ENCODE measurements at regions of chr6 and their contacts with region 1.

Region 1: GRCh38 chr6:151566557-151566956 is 72.7 kb downstream of the CCDC170 start:
- DNase-seq: no peak
- H3K4me3 Mint-ChIP-seq: no peak overlapping the region
- H3K27ac Mint-ChIP-seq: no peak overlapping the region
- H3K4me1 Mint-ChIP-seq: peaks cover 5% of the 10 kb centered on the region
- H3K27me3 Mint-ChIP-seq: peaks cover 19% of the 10 kb centered on the region

Region 2: DNA sequence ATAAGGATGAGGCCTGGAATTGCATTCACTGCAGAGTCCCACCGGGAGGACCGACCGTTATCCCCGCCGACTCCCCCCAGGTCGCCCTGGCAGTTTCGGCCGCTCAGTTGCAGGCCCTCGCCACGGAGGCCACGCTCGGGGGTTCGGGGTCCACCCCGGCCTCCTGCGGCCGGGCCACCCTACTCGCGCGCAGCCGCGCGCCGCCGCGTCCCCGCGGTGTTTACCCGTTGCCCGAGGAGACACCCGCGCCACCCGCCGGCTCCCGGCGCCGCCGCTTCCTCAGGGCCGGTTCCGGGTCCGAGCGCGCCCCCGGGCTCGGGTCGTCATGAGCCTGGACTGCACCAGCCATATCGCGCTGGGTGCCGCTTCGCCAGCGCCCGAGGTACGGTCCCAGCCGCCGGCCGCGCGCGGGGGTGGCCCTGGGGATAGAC is 72.7 kb before region 1 on chr6 and contains the start of gene CCDC170:
- CTCF ChIA-PET with region 1: no interaction called
- POLR2A ChIA-PET with region 1: no interaction called
- intact Hi-C with region 1: loop called (anchors 2 kb)
- DNase-seq: peak; percentile 32
- H3K4me3 Mint-ChIP-seq: peak within 1 kb of the TSS; percentile 71
- H3K27ac Mint-ChIP-seq: no peak within 1 kb of the TSS
- H3K4me1 Mint-ChIP-seq: peaks cover 17% of the 10 kb centered on the region
- H3K27me3 Mint-ChIP-seq: peaks cover 34% of the 10 kb centered on the region
- total RNA-seq, gene CCDC170: not detected

Region 3: GRCh38 chr6:151633511-151634335 is 67.2 kb after region 1 on chr6:
- CTCF ChIA-PET with region 1: no interaction called
- POLR2A ChIA-PET with region 1: no interaction called
- intact Hi-C with region 1: loop called (anchors 1 kb)
- DNase-seq: no peak
- H3K4me3 Mint-ChIP-seq: no peak overlapping the region
- H3K27ac Mint-ChIP-seq: no peak overlapping the region
- H3K4me1 Mint-ChIP-seq: peaks cover 2% of the 10 kb centered on the region
- H3K27me3 Mint-ChIP-seq: peaks cover 23% of the 10 kb centered on the region

Region 4: GRCh38 chr6:151723152-151723551 is 156.6 kb after region 1 on chr6:
- CTCF ChIA-PET with region 1: no interaction called
- POLR2A ChIA-PET with region 1: no interaction called
- intact Hi-C with region 1: loop called (anchors 1 kb)
- DNase-seq: peak; percentile 69
- H3K4me3 Mint-ChIP-seq: no peak overlapping the region
- H3K27ac Mint-ChIP-seq: peak overlapping the region; percentile 9
- H3K4me1 Mint-ChIP-seq: peaks cover 23% of the 10 kb centered on the region
- H3K27me3 Mint-ChIP-seq: peaks cover 3% of the 10 kb centered on the region

Measured in activated CD4-positive, alpha-beta memory T cell treated with anti-CD3 and anti-CD28 coated beads for 36 hours (primary cell).